Activated CD4-positive, alpha-beta memory T cell treated with anti-CD3 and anti-CD28 coated beads for 36 hours (primary cell): ENCODE measurements at regions of chr6 and their contacts with region 1.

Region 1: GRCh38 chr6:137799950-137800568 is 67.0 kb upstream of the TNFAIP3 start:
- DNase-seq: peak; percentile 72
- H3K4me3 Mint-ChIP-seq: peak overlapping the region; percentile 4
- H3K27ac Mint-ChIP-seq: peak overlapping the region; percentile 69
- H3K4me1 Mint-ChIP-seq: peaks cover 57% of the 10 kb centered on the region
- H3K27me3 Mint-ChIP-seq: no peaks in the 10 kb centered on the region

Region 2: GRCh38 chr6:137717074-137718073 is 82.7 kb before region 1 on chr6:
- CTCF ChIA-PET with region 1: interaction called, 16 read pairs
- POLR2A ChIA-PET with region 1: interaction called, 3 read pairs
- intact Hi-C with region 1: no loop called
- DNase-seq: peak; percentile 90
- H3K4me3 Mint-ChIP-seq: no peak overlapping the region
- H3K27ac Mint-ChIP-seq: peak overlapping the region; percentile 69
- H3K4me1 Mint-ChIP-seq: peaks cover 47% of the 10 kb centered on the region
- H3K27me3 Mint-ChIP-seq: no peaks in the 10 kb centered on the region

Region 3: DNA sequence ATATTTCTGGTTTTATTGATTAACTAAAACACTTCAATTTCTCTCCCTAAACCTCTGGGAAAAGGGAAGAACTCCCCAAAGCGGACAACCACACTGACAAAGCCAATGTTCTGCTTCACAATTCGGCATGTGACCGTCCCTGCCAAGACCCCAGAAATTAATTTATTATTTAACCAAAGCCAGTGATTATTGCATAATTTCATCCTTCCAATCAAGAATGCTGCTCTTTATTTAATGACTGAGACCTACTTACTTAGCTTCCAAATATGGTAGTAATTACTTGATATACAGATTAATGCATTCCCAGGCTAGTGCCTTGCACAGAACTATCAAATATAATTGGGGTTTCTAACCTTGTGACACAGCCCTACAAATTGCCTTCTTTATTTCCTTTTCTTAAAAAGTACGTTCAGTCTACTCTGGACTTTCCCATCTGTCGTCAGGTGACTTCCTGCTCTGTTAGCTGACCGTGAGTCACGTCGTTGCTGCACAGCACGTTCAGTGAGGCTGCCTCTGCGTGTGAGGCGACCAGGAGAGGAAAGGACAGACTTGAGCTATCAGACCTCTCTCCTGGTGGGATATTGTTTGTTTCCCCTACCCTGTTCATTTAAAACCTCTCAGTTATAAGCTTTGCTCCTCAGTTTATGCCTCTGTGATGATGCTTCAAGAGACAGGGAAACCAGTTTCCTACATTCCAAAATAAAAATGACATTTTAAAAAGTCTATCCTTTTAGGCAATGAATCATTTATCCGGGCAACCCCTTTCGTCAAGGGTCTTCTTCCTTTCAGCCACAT is 11.3 kb after region 1 on chr6:
- CTCF ChIA-PET with region 1: interaction called, 24 read pairs
- POLR2A ChIA-PET with region 1: interaction called, 8 read pairs
- intact Hi-C with region 1: loop called (anchors 1 kb)
- DNase-seq: peak; percentile 90
- H3K4me3 Mint-ChIP-seq: peak overlapping the region; percentile 36
- H3K27ac Mint-ChIP-seq: peak overlapping the region; percentile 91
- H3K4me1 Mint-ChIP-seq: peaks cover 66% of the 10 kb centered on the region
- H3K27me3 Mint-ChIP-seq: no peaks in the 10 kb centered on the region

Region 4: GRCh38 chr6:137823826-137824555 is 23.9 kb after region 1 on chr6:
- CTCF ChIA-PET with region 1: interaction called, 12 read pairs
- POLR2A ChIA-PET with region 1: interaction called, 5 read pairs
- intact Hi-C with region 1: loop called (anchors 1 kb)
- DNase-seq: peak; percentile 83
- H3K4me3 Mint-ChIP-seq: peak overlapping the region; percentile 70
- H3K27ac Mint-ChIP-seq: peak overlapping the region; percentile 96
- H3K4me1 Mint-ChIP-seq: peaks cover 83% of the 10 kb centered on the region
- H3K27me3 Mint-ChIP-seq: no peaks in the 10 kb centered on the region

Region 5: GRCh38 chr6:137975188-137975940 is 175.3 kb after region 1 on chr6:
- CTCF ChIA-PET with region 1: interaction called, 14 read pairs
- POLR2A ChIA-PET with region 1: interaction called, 4 read pairs
- intact Hi-C with region 1: loop called (anchors 2 kb)
- DNase-seq: peak; percentile 38
- H3K4me3 Mint-ChIP-seq: peak overlapping the region; percentile 64
- H3K27ac Mint-ChIP-seq: peak overlapping the region; percentile 84
- H3K4me1 Mint-ChIP-seq: peaks cover 59% of the 10 kb centered on the region
- H3K27me3 Mint-ChIP-seq: no peaks in the 10 kb centered on the region

Region 6: DNA sequence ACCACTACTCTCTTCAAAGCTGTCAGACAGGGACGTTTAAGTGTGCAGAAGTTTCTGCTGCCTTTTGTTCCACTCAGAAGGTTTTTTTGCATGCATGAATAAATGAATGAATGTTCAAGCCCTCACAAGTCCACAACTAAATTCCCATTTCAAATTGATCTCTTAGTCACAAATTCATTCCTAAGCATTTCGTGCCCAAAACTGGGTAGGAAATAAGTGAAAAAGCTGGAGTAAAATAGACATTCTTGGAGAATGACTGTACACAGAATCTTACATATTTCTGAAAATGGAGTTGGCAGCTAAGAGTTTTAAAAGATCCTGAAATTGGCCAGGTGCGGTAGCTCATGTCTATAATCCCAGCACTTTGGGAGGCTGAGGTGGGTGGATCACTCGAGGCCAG is 189.6 kb after region 1 on chr6:
- CTCF ChIA-PET with region 1: no interaction called
- POLR2A ChIA-PET with region 1: no interaction called
- intact Hi-C with region 1: no loop called
- DNase-seq: no peak
- H3K4me3 Mint-ChIP-seq: no peak overlapping the region
- H3K27ac Mint-ChIP-seq: no peak overlapping the region
- H3K4me1 Mint-ChIP-seq: no peaks in the 10 kb centered on the region
- H3K27me3 Mint-ChIP-seq: peaks cover 11% of the 10 kb centered on the region

Region 7: GRCh38 chr6:138036111-138036510 is 236.1 kb after region 1 on chr6:
- CTCF ChIA-PET with region 1: no interaction called
- POLR2A ChIA-PET with region 1: no interaction called
- intact Hi-C with region 1: no loop called
- DNase-seq: no peak
- H3K4me3 Mint-ChIP-seq: no peak overlapping the region
- H3K27ac Mint-ChIP-seq: no peak overlapping the region
- H3K4me1 Mint-ChIP-seq: no peaks in the 10 kb centered on the region
- H3K27me3 Mint-ChIP-seq: peaks cover 6% of the 10 kb centered on the region

Region 8: GRCh38 chr6:138109042-138109997 is 309.3 kb after region 1 on chr6:
- CTCF ChIA-PET with region 1: no interaction called
- POLR2A ChIA-PET with region 1: no interaction called
- intact Hi-C with region 1: loop called (anchors 1 kb)
- DNase-seq: peak; percentile 89
- H3K4me3 Mint-ChIP-seq: no peak overlapping the region
- H3K27ac Mint-ChIP-seq: no peak overlapping the region
- H3K4me1 Mint-ChIP-seq: peaks cover 21% of the 10 kb centered on the region
- H3K27me3 Mint-ChIP-seq: peaks cover 12% of the 10 kb centered on the region